B cell (primary cell): ENCODE measurements at regions of chr3 and their contacts with region 1.

Region 1: GRCh38 chr3:15629860-15630597 is 28.5 kb downstream of the BTD start:
- DNase-seq: peak; percentile 84
- ATAC-seq: peak; percentile 97
- H3K4me3 ChIP-seq: peak overlapping the region in 1 of 5 experiments; percentile 4
- H3K4me3 Mint-ChIP-seq: peak overlapping the region; percentile 48
- H3K27ac ChIP-seq: no peak overlapping the region
- H3K27ac Mint-ChIP-seq: peak overlapping the region; percentile 22
- H3K4me1 ChIP-seq: peaks cover 9 to 10% of the 10 kb centered on the region in 2 donors
- H3K4me1 Mint-ChIP-seq: peaks cover 13% of the 10 kb centered on the region
- H3K27me3 ChIP-seq: no peaks in the 10 kb centered on the region
- H3K27me3 Mint-ChIP-seq: no peaks in the 10 kb centered on the region
- CTCF ChIP-seq: peak; percentile 78

Region 2: GRCh38 chr3:15693355-15693754 is 63.3 kb after region 1 on chr3:
- CTCF ChIA-PET with region 1: no interaction called
- POLR2A ChIA-PET with region 1: no interaction called
- intact Hi-C with region 1: loop called (anchors 2 kb)
- DNase-seq: no peak
- ATAC-seq: no peak
- H3K4me3 ChIP-seq: no peak overlapping the region
- H3K4me3 Mint-ChIP-seq: no peak overlapping the region
- H3K27ac ChIP-seq: no peak overlapping the region
- H3K27ac Mint-ChIP-seq: no peak overlapping the region
- H3K4me1 ChIP-seq: no peaks in the 10 kb centered on the region
- H3K4me1 Mint-ChIP-seq: peaks cover 5% of the 10 kb centered on the region
- H3K27me3 ChIP-seq: no peaks in the 10 kb centered on the region
- H3K27me3 Mint-ChIP-seq: no peaks in the 10 kb centered on the region
- CTCF ChIP-seq: peak; percentile 12

Region 3: GRCh38 chr3:15797642-15798303 is 167.7 kb after region 1 on chr3 and contains the start of gene ANKRD28:
- CTCF ChIA-PET with region 1: interaction called, 12 read pairs
- POLR2A ChIA-PET with region 1: no interaction called
- intact Hi-C with region 1: no loop called
- DNase-seq: peak; percentile 57
- ATAC-seq: no peak
- H3K4me3 ChIP-seq: peak within 1 kb of the TSS in 3 of 5 experiments; percentile 18 to 52 (median 50)
- H3K4me3 Mint-ChIP-seq: peak within 1 kb of the TSS; percentile 70
- H3K27ac ChIP-seq: peak within 1 kb of the TSS; percentile 47 to 91
- H3K27ac Mint-ChIP-seq: peak within 1 kb of the TSS; percentile 64
- H3K4me1 ChIP-seq: peaks cover 33 to 39% of the 10 kb centered on the region in 2 donors
- H3K4me1 Mint-ChIP-seq: peaks cover 68% of the 10 kb centered on the region
- H3K27me3 ChIP-seq: no peaks in the 10 kb centered on the region
- H3K27me3 Mint-ChIP-seq: no peaks in the 10 kb centered on the region
- CTCF ChIP-seq: no peak
- total RNA-seq, gene ANKRD28: 37.4 and 45.7 TPM in 2 replicates

Region 4: GRCh38 chr3:15805756-15806266 is 175.8 kb after region 1 on chr3:
- CTCF ChIA-PET with region 1: interaction called, 87 read pairs
- POLR2A ChIA-PET with region 1: no interaction called
- intact Hi-C with region 1: no loop called
- DNase-seq: peak; percentile 61
- ATAC-seq: peak; percentile 71
- H3K4me3 ChIP-seq: no peak overlapping the region
- H3K4me3 Mint-ChIP-seq: no peak overlapping the region
- H3K27ac ChIP-seq: peak overlapping the region; percentile 27 to 37
- H3K27ac Mint-ChIP-seq: peak overlapping the region; percentile 43
- H3K4me1 ChIP-seq: peaks cover 7 to 16% of the 10 kb centered on the region in 2 donors
- H3K4me1 Mint-ChIP-seq: peaks cover 46% of the 10 kb centered on the region
- H3K27me3 ChIP-seq: no peaks in the 10 kb centered on the region
- H3K27me3 Mint-ChIP-seq: no peaks in the 10 kb centered on the region
- CTCF ChIP-seq: no peak